B cell (primary cell): ENCODE measurements at regions of chr7 and their contacts with region 1.

Region 1: DNA sequence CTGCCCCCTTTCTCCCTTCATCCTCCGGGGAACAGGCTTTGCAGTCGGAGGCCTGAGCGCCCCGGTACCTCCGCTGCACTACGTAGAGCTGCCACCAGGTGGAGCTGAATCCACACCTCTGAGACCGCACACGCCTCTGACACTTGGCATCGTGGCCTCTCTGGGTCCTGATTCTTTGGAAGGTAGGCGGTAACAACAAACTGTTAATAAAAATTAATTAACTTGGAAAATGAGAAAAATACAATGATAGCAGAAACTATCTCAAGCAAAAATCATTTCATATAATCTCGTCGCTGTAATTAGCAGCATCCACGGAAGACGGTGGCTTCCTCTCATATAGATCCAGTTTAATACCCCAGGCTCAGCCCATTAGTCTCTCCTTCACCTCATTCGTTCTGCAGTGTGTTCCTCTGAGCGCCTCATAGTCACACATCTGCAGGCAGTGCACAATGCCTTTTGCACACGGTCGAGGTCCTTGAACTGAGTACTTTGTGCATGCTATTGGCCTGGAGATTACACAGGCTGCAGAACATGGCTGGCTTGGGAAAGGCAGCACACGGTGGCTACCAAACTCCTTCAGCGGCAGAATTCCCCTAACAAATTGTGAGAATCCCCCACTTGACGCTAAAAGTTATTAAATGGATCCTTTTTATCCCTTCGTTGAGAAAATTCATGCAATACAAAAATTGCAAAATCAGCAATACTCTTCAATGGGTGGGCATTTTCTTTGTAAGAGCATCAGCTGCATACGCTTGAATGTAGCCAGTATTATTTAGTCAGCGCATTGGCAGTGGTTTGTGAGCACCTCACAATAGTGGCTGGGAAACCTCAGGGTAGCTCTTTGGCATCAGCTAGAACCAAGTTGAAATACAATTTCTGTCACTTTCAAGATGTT is 18.7 kb downstream of the OR9A2 start:
- DNase-seq: peak; percentile 88
- ATAC-seq: peak; percentile 96
- H3K4me3 ChIP-seq: no peak overlapping the region
- H3K4me3 Mint-ChIP-seq: no peak overlapping the region
- H3K27ac ChIP-seq: no peak overlapping the region
- H3K27ac Mint-ChIP-seq: no peak overlapping the region
- H3K4me1 ChIP-seq: peaks cover 36 to 49% of the 10 kb centered on the region in 2 donors
- H3K4me1 Mint-ChIP-seq: peaks cover 49% of the 10 kb centered on the region
- H3K27me3 ChIP-seq: no peaks in the 10 kb centered on the region
- H3K27me3 Mint-ChIP-seq: no peaks in the 10 kb centered on the region
- CTCF ChIP-seq: peak; percentile 92

Region 2: DNA sequence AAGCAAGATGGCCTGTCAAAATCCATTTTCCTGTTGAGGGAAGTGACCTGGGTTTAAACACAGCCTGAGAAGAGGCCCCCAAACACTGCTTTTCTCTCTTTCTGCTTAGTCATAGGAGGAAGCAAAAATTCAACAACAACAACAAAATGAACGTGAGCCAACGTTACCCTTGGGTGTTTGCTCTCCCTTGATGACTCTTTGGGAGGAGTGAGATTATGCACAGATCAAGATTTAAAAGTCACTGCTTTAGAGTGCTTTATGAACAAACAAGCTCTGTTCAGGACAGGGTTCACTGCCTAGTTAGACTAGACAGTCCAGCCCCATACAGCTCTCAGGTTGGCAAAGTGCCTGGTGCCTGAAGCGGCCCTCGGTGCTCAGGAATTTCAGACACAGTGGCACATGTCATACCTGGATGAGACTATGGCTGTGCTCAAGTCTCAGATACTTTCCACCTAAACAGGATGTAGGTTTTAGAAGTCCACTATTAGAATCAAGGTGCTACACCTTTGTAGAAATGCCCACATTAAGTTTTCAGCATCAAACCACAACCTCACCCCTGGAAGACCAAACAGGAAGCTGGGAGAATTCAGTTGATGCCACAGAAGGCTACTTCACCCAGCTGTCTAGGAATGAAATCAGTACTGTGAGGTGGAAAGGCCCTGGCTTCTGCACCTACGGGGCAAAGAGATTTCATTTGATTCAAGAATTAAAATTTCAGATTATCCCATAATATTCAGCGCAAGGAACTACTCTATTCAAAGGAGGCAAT is 1345.0 kb before region 1 on chr7:
- CTCF ChIA-PET with region 1: no interaction called
- POLR2A ChIA-PET with region 1: no interaction called
- intact Hi-C with region 1: no loop called
- DNase-seq: no peak
- ATAC-seq: no peak
- H3K4me3 ChIP-seq: no peak overlapping the region
- H3K4me3 Mint-ChIP-seq: no peak overlapping the region
- H3K27ac ChIP-seq: peak overlapping the region in 1 of 2 donors; percentile 21
- H3K27ac Mint-ChIP-seq: peak overlapping the region; percentile 53
- H3K4me1 ChIP-seq: no peaks in the 10 kb centered on the region
- H3K4me1 Mint-ChIP-seq: peaks cover 11% of the 10 kb centered on the region
- H3K27me3 ChIP-seq: no peaks in the 10 kb centered on the region
- H3K27me3 Mint-ChIP-seq: no peaks in the 10 kb centered on the region
- CTCF ChIP-seq: no peak

Region 3: DNA sequence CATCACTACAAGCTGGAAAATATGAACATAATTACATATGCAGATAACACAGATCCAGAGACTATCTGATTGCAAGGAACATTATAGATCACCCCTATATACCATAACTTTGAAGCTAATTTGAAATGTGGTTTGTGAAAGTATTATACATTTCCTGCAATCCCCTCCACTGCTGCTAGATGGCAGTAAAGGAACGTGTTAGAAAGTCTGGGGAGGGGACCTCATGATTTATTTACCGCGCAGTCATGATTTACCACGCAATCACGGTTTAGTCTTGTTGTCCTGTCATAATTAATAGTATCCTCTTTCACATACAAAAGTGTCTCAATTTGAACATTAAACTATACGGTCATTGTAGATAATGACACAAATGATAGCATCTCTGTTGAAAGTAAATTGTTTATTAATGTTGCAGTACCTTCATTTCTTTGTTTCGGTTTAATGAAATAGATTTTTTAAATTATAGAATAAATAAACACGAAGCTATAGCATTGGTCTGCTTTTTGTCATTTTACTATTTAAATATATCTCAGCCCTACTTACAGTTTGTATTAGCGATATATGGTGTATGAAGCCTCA is 404.3 kb before region 1 on chr7:
- CTCF ChIA-PET with region 1: interaction called, 65 read pairs
- POLR2A ChIA-PET with region 1: no interaction called
- intact Hi-C with region 1: loop called (anchors 1 kb)
- DNase-seq: peak; percentile 72
- ATAC-seq: peak; percentile 63
- H3K4me3 ChIP-seq: no peak overlapping the region
- H3K4me3 Mint-ChIP-seq: no peak overlapping the region
- H3K27ac ChIP-seq: no peak overlapping the region
- H3K27ac Mint-ChIP-seq: no peak overlapping the region
- H3K4me1 ChIP-seq: no peaks in the 10 kb centered on the region
- H3K4me1 Mint-ChIP-seq: no peaks in the 10 kb centered on the region
- H3K27me3 ChIP-seq: peaks cover 0 to 2% (median 0%) of the 10 kb centered on the region in 4 experiments
- H3K27me3 Mint-ChIP-seq: peaks cover 32% of the 10 kb centered on the region
- CTCF ChIP-seq: peak; percentile 93

Region 4: DNA sequence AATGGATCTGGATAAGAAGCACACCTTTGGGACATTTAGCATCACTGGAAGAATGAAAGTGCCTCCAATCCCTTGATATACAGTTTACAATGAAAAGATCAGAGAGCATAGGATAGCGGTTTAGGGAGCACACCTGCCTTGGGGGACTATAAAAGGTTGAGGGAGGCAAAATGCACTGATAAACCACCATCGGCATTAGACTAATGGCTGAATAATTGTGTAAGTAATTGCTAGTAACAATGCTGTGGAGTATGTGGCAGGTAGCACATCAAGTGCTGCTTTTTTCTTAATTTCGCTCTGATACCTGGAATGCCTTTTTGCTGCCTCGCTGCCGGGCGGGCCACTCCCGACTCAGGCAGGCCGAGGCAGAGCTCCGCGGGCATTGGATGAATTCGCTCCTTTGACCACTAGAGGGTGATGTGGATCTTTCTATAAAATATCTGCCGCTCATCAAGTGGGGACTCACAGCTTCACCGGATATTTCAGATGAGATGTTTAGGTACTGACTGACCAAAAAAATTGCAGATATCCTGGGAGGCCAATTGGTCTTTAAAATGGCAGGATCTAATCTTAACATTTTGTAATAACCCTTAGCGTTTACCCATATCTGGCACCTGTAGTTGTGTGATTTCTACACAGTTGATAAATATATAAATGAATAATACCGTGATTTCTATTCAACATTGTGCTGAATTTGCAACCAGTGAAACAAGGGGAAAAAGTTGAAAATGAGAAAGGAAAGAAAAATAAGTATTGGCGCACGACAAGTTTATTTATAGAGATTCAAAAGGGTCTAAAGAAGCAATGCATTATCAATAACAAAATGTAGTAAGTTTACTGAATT is 375.7 kb before region 1 on chr7:
- CTCF ChIA-PET with region 1: interaction called, 133 read pairs
- POLR2A ChIA-PET with region 1: no interaction called
- intact Hi-C with region 1: loop called (anchors 1 kb)
- DNase-seq: peak; percentile 85
- ATAC-seq: peak; percentile 97
- H3K4me3 ChIP-seq: no peak overlapping the region
- H3K4me3 Mint-ChIP-seq: no peak overlapping the region
- H3K27ac ChIP-seq: no peak overlapping the region
- H3K27ac Mint-ChIP-seq: no peak overlapping the region
- H3K4me1 ChIP-seq: no peaks in the 10 kb centered on the region
- H3K4me1 Mint-ChIP-seq: peaks cover 3% of the 10 kb centered on the region
- H3K27me3 ChIP-seq: peaks cover 0 to 5% (median 2%) of the 10 kb centered on the region in 4 experiments
- H3K27me3 Mint-ChIP-seq: peaks cover 30% of the 10 kb centered on the region
- CTCF ChIP-seq: peak; percentile 85

Region 5: DNA sequence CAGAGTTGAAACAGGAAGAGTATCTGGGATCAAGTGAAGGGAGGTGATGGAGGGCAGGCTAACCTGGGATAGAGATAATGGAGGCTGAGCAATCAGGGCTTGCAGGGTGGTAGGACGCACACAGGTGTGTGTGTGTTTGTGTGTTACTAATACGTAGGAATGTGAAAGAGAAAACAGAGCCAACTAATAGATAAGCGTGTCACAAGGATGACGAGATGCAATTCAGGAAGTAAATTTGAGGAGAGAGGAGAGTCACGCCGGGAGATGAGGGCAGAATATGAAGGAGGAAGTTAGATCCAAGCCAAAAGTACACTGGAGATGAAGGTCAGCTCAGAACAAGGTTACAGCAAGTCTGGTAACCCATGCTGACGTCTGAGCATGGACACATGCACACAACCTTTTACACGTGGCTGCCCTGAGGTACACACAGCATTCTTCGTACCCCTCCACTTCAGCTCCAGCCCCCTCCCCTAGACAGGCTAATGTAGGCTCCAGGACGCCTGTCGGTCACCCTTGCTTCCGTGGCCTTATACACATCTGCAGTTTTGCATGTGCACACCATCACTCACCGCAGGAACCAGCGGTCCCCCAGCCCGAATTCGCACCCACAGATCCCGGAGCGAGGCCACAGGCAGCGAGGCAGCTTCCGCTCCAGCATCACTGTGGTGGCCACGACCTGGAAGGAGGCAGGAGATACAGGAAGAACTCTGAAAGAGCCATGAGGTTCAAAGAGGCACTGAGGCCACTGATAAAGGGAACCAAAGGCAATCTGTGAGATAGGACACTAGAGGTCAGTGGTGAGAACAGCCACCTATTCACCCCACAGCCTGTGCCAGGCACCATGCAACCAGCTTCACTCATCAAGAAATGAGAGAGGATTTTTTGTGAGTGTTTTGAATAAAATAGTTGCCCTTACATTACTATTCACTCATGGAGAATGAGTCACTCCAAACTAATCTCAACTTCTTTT is 99.0 kb before region 1 on chr7:
- CTCF ChIA-PET with region 1: interaction called, 21 read pairs
- POLR2A ChIA-PET with region 1: no interaction called
- intact Hi-C with region 1: no loop called
- DNase-seq: peak; percentile 31
- ATAC-seq: peak; percentile 51
- H3K4me3 ChIP-seq: no peak overlapping the region
- H3K4me3 Mint-ChIP-seq: no peak overlapping the region
- H3K27ac ChIP-seq: no peak overlapping the region
- H3K27ac Mint-ChIP-seq: no peak overlapping the region
- H3K4me1 ChIP-seq: no peaks in the 10 kb centered on the region
- H3K4me1 Mint-ChIP-seq: no peaks in the 10 kb centered on the region
- H3K27me3 ChIP-seq: peaks cover 0 to 9% (median 3%) of the 10 kb centered on the region in 4 experiments
- H3K27me3 Mint-ChIP-seq: peaks cover 39% of the 10 kb centered on the region
- CTCF ChIP-seq: peak; percentile 29

Region 6: GRCh38 chr7:142919656-142920055 is 88.6 kb before region 1 on chr7:
- CTCF ChIA-PET with region 1: no interaction called
- POLR2A ChIA-PET with region 1: no interaction called
- intact Hi-C with region 1: no loop called
- DNase-seq: no peak
- ATAC-seq: no peak
- H3K4me3 ChIP-seq: no peak overlapping the region
- H3K4me3 Mint-ChIP-seq: no peak overlapping the region
- H3K27ac ChIP-seq: no peak overlapping the region
- H3K27ac Mint-ChIP-seq: no peak overlapping the region
- H3K4me1 ChIP-seq: no peaks in the 10 kb centered on the region
- H3K4me1 Mint-ChIP-seq: no peaks in the 10 kb centered on the region
- H3K27me3 ChIP-seq: peaks cover 0 to 4% (median 0%) of the 10 kb centered on the region in 4 experiments
- H3K27me3 Mint-ChIP-seq: peaks cover 17% of the 10 kb centered on the region
- CTCF ChIP-seq: no peak

Region 7: GRCh38 chr7:143085109-143085508 is 76.9 kb after region 1 on chr7:
- CTCF ChIA-PET with region 1: interaction called, 11 read pairs
- POLR2A ChIA-PET with region 1: no interaction called
- intact Hi-C with region 1: no loop called
- DNase-seq: peak; percentile 86
- ATAC-seq: peak; percentile 96
- H3K4me3 ChIP-seq: peak overlapping the region in 2 of 5 experiments; percentile 5 to 46
- H3K4me3 Mint-ChIP-seq: peak overlapping the region; percentile 68
- H3K27ac ChIP-seq: peak overlapping the region; percentile 73 to 84
- H3K27ac Mint-ChIP-seq: peak overlapping the region; percentile 84
- H3K4me1 ChIP-seq: peaks cover 34 to 40% of the 10 kb centered on the region in 2 donors
- H3K4me1 Mint-ChIP-seq: peaks cover 47% of the 10 kb centered on the region
- H3K27me3 ChIP-seq: no peaks in the 10 kb centered on the region
- H3K27me3 Mint-ChIP-seq: no peaks in the 10 kb centered on the region
- CTCF ChIP-seq: no peak